BJ (cell line): ENCODE measurements at regions of chr12 and their contacts with region 1.

Region 1: DNA sequence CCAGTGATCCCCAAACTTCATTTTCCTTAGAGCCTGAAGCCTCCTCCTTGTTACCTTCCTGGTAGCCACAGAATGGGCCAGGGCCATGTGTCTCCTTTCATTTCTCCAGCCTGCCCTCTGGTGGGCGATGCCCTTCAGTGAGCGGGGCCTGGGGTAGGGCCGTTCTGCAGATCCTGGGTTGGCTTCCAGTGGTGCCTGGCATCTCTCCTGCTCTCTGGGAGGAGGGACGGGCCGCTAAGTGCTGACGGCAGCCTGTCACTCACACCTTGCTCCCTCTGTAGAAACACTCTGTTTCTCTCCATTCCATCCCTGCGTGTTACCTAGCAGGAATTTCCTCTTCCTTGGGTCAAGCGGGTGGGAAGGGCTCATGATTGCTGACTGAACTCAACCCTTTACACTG is 232.1 kb downstream of the CACNA1C start:
- DNase-seq: no peak
- H3K4me3 ChIP-seq: no peak overlapping the region
- H3K27me3 ChIP-seq: no peaks in the 10 kb centered on the region
- CTCF ChIP-seq: peak; percentile 80

Region 2: GRCh38 chr12:1873531-1874510 is 411.0 kb before region 1 on chr12:
- CTCF ChIA-PET with region 1: no interaction called
- POLR2A ChIA-PET with region 1: no interaction called
- DNase-seq: no peak
- H3K4me3 ChIP-seq: no peak overlapping the region
- H3K27me3 ChIP-seq: peaks cover 22% of the 10 kb centered on the region
- CTCF ChIP-seq: no peak

Region 3: DNA sequence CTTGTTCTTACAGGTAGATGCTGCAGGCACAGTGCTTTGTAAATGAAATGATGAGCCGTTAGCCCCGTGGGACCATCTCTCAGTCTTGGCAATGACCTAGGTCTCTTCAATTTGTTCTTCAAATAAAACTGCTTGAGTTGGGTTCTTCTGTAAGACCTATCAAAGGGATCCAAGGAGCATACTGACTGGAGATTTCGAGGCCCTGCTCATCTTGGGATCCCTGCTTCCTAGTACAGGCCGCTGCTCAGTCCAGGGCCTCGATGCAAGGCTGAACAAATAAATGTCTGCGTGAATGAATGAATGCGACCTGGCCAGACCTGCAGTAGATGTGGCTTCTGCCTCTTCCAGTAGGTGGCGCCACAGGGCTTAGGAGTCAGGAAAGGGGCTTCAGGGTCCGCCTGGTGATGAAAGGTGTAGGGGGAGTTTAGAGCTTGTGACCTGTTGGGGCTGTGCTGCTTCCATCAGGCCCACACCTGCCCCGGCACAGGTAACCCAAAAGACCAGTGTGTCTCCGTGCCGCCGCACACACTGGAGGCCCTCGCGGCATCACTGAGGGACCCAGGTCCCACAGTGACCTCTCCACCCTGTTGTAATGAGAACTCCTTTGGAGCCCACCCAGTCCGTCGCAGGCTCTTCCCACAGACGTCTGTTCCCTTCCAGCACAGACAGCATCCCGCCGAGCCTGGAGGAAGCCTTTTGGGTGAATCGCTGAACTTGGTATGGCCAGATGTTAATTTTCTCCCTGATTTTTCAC is 227.6 kb before region 1 on chr12:
- CTCF ChIA-PET with region 1: interaction called, 12 read pairs
- POLR2A ChIA-PET with region 1: interaction called, 9 read pairs
- DNase-seq: no peak
- H3K4me3 ChIP-seq: no peak overlapping the region
- H3K27me3 ChIP-seq: no peaks in the 10 kb centered on the region
- CTCF ChIP-seq: peak; percentile 86

Region 4: DNA sequence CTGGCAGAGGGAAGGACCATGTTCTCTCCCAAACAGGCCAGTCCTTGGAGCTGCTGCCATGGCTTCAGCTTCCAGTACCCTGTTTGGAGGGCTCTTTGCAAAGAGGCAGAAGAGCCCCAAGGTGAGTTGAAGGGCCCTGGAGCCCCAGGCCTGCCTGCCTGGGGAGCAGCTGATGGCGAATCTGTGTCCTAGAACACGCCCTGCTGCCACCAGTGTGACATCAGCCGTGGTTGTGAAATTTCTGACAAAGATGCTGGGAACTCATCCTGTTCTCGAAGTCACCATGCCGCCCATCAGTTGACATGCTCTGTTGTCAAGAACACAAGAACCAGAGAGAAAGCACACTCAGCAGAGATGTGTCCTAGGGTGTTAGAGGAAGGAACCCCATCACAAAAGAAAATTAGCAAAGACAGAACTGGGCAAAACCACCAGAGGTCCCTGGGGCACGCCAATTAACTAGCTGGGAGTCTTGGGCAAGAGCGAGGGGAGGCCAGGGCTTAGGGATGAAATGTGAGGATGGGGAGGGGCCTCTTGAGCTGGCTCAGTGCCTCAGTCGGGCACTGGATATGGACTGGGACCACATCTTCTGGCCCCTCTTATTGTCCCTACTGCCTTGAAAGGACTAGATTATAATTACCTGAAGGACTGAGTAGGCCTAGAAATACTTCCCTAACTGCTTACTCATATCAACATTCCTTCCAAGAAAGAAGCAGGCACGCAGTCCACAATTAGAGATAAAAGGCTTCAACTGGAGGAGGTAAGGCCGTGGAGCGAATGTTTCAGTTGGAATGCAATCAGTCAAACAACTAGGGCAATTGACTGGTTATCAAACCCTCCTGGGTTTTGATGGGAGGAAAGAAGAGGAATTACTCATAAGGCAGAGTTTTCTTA is 68.9 kb before region 1 on chr12:
- CTCF ChIA-PET with region 1: no interaction called
- POLR2A ChIA-PET with region 1: no interaction called
- DNase-seq: no peak
- H3K4me3 ChIP-seq: no peak overlapping the region
- H3K27me3 ChIP-seq: no peaks in the 10 kb centered on the region
- CTCF ChIP-seq: no peak

Region 5: DNA sequence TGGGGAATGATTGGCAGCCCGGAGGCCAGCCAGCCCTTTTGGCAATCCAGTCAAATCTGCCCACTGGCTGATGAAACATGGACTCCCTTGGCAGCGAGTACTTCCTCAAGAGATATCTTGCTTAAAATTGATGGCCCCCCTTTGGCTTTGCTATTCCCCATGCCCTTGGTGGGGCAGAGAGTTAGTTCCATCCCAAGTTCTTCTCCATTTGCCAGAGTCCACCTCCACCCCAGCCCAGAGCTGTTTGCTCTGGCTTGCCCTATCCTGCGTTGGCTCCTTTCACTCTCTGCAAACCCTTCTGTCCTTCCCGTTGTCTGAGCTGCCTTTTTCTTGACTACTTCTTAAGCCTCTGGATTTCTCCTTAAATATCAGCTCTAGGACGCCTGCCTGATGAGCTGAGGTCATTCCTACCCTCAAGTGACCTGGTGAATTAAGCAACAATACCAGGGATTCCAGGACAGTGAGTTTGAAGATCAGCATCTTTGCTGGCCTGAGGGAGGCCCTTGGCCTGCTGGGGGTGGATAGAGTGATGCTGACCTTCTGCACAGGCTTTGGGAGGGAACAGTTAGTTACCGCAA is 20.1 kb before region 1 on chr12:
- CTCF ChIA-PET with region 1: interaction called, 26 read pairs
- POLR2A ChIA-PET with region 1: interaction called, 3 read pairs
- DNase-seq: peak; percentile 96
- H3K4me3 ChIP-seq: no peak overlapping the region
- H3K27me3 ChIP-seq: no peaks in the 10 kb centered on the region
- CTCF ChIP-seq: no peak